A549 (cell line): ENCODE measurements at regions of chr10 and their contacts with region 1.

Region 1: GRCh38 chr10:12264204-12264940 is 68.4 kb downstream of the CDC123 start:
- DNase-seq: peak; percentile 76 to 85
- ATAC-seq: peak; percentile 90 to 92
- H3K4me3 ChIP-seq: peak overlapping the region; percentile 28; the same call in 2 of the 3 replicates
- H3K27ac ChIP-seq: peak overlapping the region; percentile 75 to 92
- H3K4me1 ChIP-seq: peaks cover 23% of the 10 kb centered on the region
- CTCF ChIP-seq: peak; percentile 97
- EP300 ChIP-seq: no peak; a peak in 1 of 5 replicates
- POLR2A ChIP-seq: no peak
- RAD21 ChIP-seq: peak; percentile 96 to 99

Region 2: DNA sequence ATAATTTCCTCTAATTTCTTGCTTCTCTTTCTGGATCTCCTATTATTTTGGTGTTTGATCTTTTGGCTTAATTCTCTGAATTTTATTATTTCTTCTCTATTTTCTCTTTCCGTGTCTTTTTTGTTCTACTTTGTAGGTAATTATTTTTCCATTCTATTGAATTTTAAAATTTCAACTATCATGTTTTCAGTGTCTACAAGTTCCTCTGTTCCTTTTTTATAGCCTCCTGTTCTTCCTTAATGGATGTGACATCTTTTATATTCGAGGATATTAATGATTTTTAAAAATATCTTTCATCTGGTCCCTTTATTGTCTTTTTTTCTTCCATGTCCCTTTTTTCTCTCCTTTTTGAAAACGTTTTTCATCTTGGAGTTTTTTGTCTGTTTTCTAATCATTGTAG is 57.3 kb before region 1 on chr10:
- CTCF ChIA-PET with region 1: no interaction called
- POLR2A ChIA-PET with region 1: no interaction called
- DNase-seq: no peak
- ATAC-seq: no peak
- H3K4me3 ChIP-seq: no peak overlapping the region
- H3K27ac ChIP-seq: no peak overlapping the region
- H3K4me1 ChIP-seq: no peaks in the 10 kb centered on the region
- CTCF ChIP-seq: no peak
- EP300 ChIP-seq: no peak
- POLR2A ChIP-seq: no peak
- RAD21 ChIP-seq: no peak

Region 3: DNA sequence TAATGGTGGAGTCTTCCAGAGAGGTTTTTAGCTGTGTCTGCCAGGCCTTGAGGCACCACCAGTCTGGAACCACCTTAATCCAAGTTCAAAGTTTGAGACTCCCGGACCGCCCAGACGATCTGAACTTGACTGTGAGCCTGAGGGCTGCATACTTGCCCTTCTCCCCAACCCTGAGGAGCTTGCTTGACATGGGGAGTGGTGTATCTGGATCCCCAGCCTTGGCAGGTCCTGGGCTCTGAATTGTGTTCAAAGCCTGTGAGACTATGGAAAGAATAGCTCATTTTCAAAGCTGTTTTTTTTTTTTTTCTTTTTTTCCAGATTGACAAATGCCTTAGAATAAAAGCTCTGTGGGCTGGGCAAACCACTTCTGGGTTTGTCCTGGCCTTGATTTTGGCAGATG is 62.7 kb after region 1 on chr10:
- CTCF ChIA-PET with region 1: interaction called, 11 read pairs
- POLR2A ChIA-PET with region 1: no interaction called
- DNase-seq: no peak
- ATAC-seq: no peak; a peak in 1 of 6 replicates
- H3K4me3 ChIP-seq: no peak overlapping the region
- H3K27ac ChIP-seq: peak overlapping the region; percentile 67 to 93; a peak in 3 of 6 replicates
- H3K4me1 ChIP-seq: peaks cover 35% of the 10 kb centered on the region
- CTCF ChIP-seq: no peak
- EP300 ChIP-seq: no peak
- POLR2A ChIP-seq: no peak
- RAD21 ChIP-seq: no peak

Region 4: DNA sequence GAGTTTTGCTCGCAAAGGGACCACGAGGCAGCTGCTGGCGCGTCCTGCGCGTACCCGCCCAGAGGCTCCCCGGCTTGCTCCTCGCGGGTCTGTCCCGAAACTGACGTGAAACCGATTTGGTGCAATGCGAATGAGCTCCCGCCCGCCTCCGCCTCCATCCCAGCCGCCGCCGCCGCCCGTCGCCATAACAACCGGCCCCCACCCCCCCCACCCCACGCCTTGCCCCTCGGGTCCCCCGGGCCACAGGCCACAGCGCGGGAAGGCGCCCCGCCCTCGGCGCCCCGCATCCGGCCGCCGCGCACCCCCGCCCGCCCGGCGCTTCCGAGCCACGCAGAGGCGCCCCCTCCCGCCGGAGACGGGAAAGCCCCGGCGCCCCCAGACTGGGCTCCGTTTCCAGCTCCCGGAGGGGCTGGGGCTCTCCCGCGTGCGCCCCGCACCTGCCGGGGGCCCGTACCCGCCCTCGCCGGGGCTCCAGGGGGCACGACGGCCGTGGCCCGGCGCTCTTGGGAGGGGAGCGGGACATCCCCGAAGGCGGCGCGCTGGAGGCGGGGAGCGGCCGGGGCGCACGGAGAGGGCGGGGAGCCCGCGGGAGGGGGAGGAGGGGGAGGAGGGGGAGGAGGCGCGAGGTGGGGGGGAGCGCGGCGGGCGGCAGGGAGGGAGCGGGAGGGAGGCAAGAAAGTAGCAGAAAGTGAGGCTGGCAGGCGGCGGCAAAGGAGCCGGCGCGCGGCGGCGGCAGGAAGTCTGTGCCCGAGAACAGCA is 84.7 kb after region 1 on chr10 and contains the start of gene CAMK1D:
- CTCF ChIA-PET with region 1: interaction called, 30 read pairs
- POLR2A ChIA-PET with region 1: interaction called, 8 read pairs
- DNase-seq: peak; percentile 60 to 74
- ATAC-seq: peak; percentile 64 to 74
- H3K4me3 ChIP-seq: peak within 1 kb of the TSS; percentile 89
- H3K27ac ChIP-seq: peak within 1 kb of the TSS; percentile 98 to 99
- H3K4me1 ChIP-seq: peaks cover 22% of the 10 kb centered on the region
- CTCF ChIP-seq: peak; percentile 59
- EP300 ChIP-seq: no peak
- POLR2A ChIP-seq: peak; percentile 28
- RAD21 ChIP-seq: peak in 1 of 2 experiments; percentile 66; a peak in 3 of 5 replicates
- polyA plus RNA-seq, gene CAMK1D: 12.5 and 15.0 TPM in 2 replicates

Region 5: GRCh38 chr10:12405342-12406320 is 141.3 kb after region 1 on chr10:
- CTCF ChIA-PET with region 1: interaction called, 31 read pairs
- POLR2A ChIA-PET with region 1: interaction called, 3 read pairs
- DNase-seq: peak; percentile 53 to 86
- ATAC-seq: peak; percentile 86 to 87
- H3K4me3 ChIP-seq: peak overlapping the region; percentile 32
- H3K27ac ChIP-seq: peak overlapping the region; percentile 72 to 80
- H3K4me1 ChIP-seq: peaks cover 28% of the 10 kb centered on the region
- CTCF ChIP-seq: peak; percentile 27; the same call in 2 of the 3 replicates
- EP300 ChIP-seq: peak; percentile 29 to 62; a peak in 2 of 5 replicates
- POLR2A ChIP-seq: no peak
- RAD21 ChIP-seq: peak; percentile 15 to 34; a peak in 2 of 5 replicates

Region 6: DNA sequence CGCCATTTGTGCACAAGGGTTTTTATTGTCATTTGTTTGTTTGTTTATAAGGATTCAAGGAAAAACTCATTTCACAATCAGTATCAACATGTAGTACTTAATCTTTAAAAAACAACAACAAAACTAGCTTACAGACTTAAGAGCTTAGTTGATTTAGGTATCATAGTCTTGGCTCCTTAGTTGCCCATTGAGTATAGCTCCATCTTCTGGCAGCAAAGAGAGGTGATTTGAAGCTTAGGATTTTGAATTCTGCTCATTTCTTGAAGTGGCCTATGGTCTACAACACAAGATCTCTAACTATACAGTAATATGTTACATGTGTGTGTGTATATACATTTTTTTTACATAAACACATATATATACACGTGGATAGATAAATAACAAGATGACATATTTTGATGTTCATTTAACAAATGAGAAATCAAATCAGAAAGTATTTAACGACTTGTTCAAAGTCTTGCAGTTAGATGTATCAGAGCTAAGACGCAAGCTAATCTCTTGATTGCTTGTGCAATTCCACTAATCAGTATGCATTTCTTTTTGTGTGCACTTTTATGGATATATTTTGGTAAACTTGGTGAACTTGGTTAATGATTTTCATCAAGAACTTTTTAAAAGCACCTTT is 392.3 kb after region 1 on chr10:
- CTCF ChIA-PET with region 1: interaction called, 15 read pairs
- POLR2A ChIA-PET with region 1: no interaction called
- DNase-seq: peak; percentile 50 to 77
- ATAC-seq: peak; percentile 59 to 72; a peak in 4 of 6 replicates
- H3K4me3 ChIP-seq: no peak overlapping the region
- H3K27ac ChIP-seq: no peak overlapping the region
- H3K4me1 ChIP-seq: no peaks in the 10 kb centered on the region
- CTCF ChIP-seq: peak; percentile 69
- EP300 ChIP-seq: no peak
- POLR2A ChIP-seq: no peak
- RAD21 ChIP-seq: peak; percentile 80 to 82

Region 7: DNA sequence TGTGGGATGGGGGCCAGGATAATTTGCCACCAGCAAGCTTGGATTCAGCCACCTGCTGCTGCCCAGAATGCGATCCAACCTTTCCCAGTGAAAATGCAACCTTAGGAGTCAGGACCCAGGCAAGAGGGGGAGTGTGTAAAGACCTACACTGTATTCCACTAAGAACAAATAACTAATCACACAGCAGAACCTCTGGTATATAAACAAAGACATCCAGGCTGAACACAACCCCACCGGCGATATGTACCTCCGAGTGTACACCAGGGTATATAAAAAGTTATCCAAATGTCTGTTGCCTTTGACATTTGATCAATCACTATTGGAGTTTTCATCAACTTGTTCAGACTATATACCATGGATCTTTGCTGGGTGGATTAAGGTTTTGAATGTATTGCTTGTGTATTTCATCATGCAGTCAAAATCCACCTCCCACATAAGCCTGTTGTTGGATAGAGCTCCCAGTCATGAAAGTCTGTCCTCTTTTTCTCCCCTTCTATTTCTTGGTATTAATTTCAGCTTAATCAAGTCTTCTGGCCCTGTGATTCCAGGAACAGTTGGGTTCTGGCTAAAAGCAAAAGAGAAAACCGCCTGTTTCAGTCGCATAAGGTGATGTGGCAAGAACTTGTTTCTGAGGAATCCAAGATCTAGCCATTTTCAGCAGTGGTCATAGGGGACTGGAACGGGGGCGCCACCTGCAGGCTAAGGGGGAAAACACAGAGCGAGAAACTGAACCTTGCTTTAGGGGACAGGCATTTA is 446.4 kb after region 1 on chr10:
- CTCF ChIA-PET with region 1: interaction called, 76 read pairs
- POLR2A ChIA-PET with region 1: interaction called, 5 read pairs
- DNase-seq: peak; percentile 70 to 84
- ATAC-seq: peak; percentile 57 to 67; a peak in 5 of 6 replicates
- H3K4me3 ChIP-seq: no peak overlapping the region
- H3K27ac ChIP-seq: peak overlapping the region; percentile 82 to 94
- H3K4me1 ChIP-seq: peaks cover 55% of the 10 kb centered on the region
- CTCF ChIP-seq: peak; percentile 92
- EP300 ChIP-seq: no peak; a peak in 1 of 5 replicates
- POLR2A ChIP-seq: no peak
- RAD21 ChIP-seq: peak; percentile 96

Region 8: GRCh38 chr10:13074561-13075451 is 810.4 kb after region 1 on chr10:
- CTCF ChIA-PET with region 1: interaction called, 18 read pairs
- POLR2A ChIA-PET with region 1: no interaction called
- DNase-seq: peak; percentile 76 to 81
- ATAC-seq: peak; percentile 99 to 100
- H3K4me3 ChIP-seq: no peak overlapping the region
- H3K27ac ChIP-seq: no peak overlapping the region
- H3K4me1 ChIP-seq: no peaks in the 10 kb centered on the region; the same call in 2 of the 3 replicates
- CTCF ChIP-seq: peak; percentile 91
- EP300 ChIP-seq: no peak
- POLR2A ChIP-seq: no peak
- RAD21 ChIP-seq: peak; percentile 95 to 96